ENCODE measurements at regions of chr11 and their contacts with region 1.

Region 1: GRCh38 chr11:32538804-32539203 is 44.8 kb upstream of the EIF3M start:
- DNase-seq: no peak
- H3K4me3 ChIP-seq: no peak overlapping the region
- H3K27ac ChIP-seq: no peak overlapping the region
- H3K4me1 ChIP-seq: no peaks in the 10 kb centered on the region
- H3K27me3 ChIP-seq: peaks cover 4% of the 10 kb centered on the region
- CTCF ChIP-seq: no peak

Region 2: GRCh38 chr11:32555091-32555490 is 16.3 kb after region 1 on chr11:
- CTCF ChIA-PET with region 1: no interaction called
- POLR2A ChIA-PET with region 1: interaction called, 15 read pairs
- intact Hi-C with region 1: no loop called
- DNase-seq: no peak
- H3K4me3 ChIP-seq: no peak overlapping the region
- H3K27ac ChIP-seq: no peak overlapping the region
- H3K4me1 ChIP-seq: no peaks in the 10 kb centered on the region
- H3K27me3 ChIP-seq: peaks cover 1% of the 10 kb centered on the region
- CTCF ChIP-seq: no peak

Region 3: GRCh38 chr11:32821517-32821916 is 282.7 kb after region 1 on chr11:
- CTCF ChIA-PET with region 1: no interaction called
- POLR2A ChIA-PET with region 1: no interaction called
- intact Hi-C with region 1: no loop called
- DNase-seq: peak; percentile 48
- H3K4me3 ChIP-seq: no peak overlapping the region
- H3K27ac ChIP-seq: no peak overlapping the region
- H3K4me1 ChIP-seq: peaks cover 8% of the 10 kb centered on the region
- H3K27me3 ChIP-seq: no peaks in the 10 kb centered on the region
- CTCF ChIP-seq: no peak

Measured in A673 (cell line).